ENCODE measurements at regions of chr12 and their contacts with region 1.

Region 1: GRCh38 chr12:125167658-125168057 is 102.4 kb downstream of the AACS start:
- DNase-seq: no peak
- H3K4me3 ChIP-seq: no peak overlapping the region
- H3K27ac ChIP-seq: no peak overlapping the region
- H3K4me1 ChIP-seq: peaks cover 6% of the 10 kb centered on the region
- H3K27me3 ChIP-seq: no peaks in the 10 kb centered on the region
- CTCF ChIP-seq: no peak

Region 2: DNA sequence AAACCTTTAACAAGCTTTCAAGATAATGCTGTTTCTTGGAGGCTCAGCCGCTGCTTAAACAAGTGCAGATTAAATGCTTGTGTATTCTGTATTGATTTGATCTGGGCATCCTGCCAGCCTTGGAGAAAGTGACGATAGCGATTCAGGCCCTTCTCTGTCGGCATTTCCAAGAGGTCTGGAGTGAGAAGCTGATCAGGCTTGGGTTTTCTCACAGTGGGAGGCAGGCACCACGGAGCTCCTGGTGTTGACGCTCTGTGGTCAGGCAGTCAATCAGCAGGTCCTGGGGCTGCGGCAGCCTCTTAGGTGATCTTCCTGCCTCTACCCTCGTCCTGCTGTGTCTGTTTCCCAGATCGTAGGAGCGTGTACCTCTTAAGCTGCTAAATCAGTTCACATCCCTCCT is 52.7 kb after region 1 on chr12:
- CTCF ChIA-PET with region 1: no interaction called
- dilution Hi-C with region 1: loop called (anchors 5 kb)
- in situ Hi-C with region 1: no loop called
- intact Hi-C with region 1: no loop called
- DNase-seq: no peak
- H3K4me3 ChIP-seq: no peak overlapping the region
- H3K27ac ChIP-seq: no peak overlapping the region
- H3K4me1 ChIP-seq: no peaks in the 10 kb centered on the region
- H3K27me3 ChIP-seq: no peaks in the 10 kb centered on the region
- CTCF ChIP-seq: no peak

Measured in mammary epithelial cell (primary cell).